ENCODE measurements at regions of chr1 and their contacts with region 1.

Region 1: GRCh38 chr1:117284399-117285215 is 73.9 kb upstream of the VTCN1 start:
- DNase-seq: peak; percentile 73
- H3K4me3 Mint-ChIP-seq: no peak overlapping the region
- H3K27ac Mint-ChIP-seq: no peak overlapping the region
- H3K4me1 Mint-ChIP-seq: no peaks in the 10 kb centered on the region
- H3K27me3 Mint-ChIP-seq: no peaks in the 10 kb centered on the region
- CTCF ChIP-seq: peak; percentile 71

Region 2: DNA sequence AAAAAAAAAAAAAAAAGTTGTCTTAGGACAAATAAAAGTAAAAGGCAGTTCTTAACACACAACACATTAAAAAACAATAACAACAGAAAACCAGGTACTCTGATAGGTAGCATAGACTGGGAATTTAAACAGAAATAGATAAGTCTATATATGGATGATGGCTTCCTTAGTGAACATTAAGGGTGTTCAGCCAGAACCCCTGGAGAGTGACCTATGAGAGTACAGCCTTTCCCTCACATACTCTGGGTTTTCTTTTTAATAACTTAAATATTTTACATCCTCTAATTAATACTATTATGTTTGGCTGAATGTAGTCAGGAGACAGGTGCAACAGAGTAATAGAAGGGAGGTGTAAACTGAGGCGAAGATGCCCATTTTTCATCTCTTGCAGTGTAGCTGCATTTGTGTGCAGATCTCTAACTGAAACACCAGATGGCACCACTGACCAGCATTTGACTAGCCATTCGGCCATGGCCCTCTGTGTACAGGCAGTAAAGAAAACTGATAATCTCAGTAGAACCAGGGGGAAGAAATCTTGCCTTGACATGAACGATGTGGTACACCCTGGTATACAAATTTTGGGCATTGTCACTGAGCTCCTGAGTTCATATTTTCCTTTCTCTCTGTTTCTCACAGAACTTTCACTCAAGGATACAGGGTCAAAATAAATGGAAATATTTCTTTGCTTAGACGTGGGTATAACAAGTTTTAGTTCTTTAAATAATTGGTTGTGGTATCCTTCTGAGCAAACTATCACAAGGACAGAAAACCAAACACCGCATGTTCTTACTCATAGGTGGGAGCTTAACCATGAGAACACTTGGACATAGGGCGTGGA is 216.9 kb before region 1 on chr1:
- CTCF ChIA-PET with region 1: interaction called, 110 read pairs
- POLR2A ChIA-PET with region 1: interaction called, 4 read pairs
- intact Hi-C with region 1: loop called (anchors 1 kb)
- DNase-seq: peak; percentile 66
- H3K4me3 Mint-ChIP-seq: no peak overlapping the region
- H3K27ac Mint-ChIP-seq: no peak overlapping the region
- H3K4me1 Mint-ChIP-seq: peaks cover 7% of the 10 kb centered on the region
- H3K27me3 Mint-ChIP-seq: no peaks in the 10 kb centered on the region
- CTCF ChIP-seq: peak; percentile 82

Region 3: GRCh38 chr1:117093870-117094621 is 190.6 kb before region 1 on chr1:
- CTCF ChIA-PET with region 1: interaction called, 16 read pairs
- POLR2A ChIA-PET with region 1: interaction called, 3 read pairs
- intact Hi-C with region 1: no loop called
- DNase-seq: peak; percentile 78
- H3K4me3 Mint-ChIP-seq: no peak overlapping the region
- H3K27ac Mint-ChIP-seq: peak overlapping the region; percentile 93
- H3K4me1 Mint-ChIP-seq: peaks cover 36% of the 10 kb centered on the region
- H3K27me3 Mint-ChIP-seq: no peaks in the 10 kb centered on the region
- CTCF ChIP-seq: peak; percentile 40

Region 4: DNA sequence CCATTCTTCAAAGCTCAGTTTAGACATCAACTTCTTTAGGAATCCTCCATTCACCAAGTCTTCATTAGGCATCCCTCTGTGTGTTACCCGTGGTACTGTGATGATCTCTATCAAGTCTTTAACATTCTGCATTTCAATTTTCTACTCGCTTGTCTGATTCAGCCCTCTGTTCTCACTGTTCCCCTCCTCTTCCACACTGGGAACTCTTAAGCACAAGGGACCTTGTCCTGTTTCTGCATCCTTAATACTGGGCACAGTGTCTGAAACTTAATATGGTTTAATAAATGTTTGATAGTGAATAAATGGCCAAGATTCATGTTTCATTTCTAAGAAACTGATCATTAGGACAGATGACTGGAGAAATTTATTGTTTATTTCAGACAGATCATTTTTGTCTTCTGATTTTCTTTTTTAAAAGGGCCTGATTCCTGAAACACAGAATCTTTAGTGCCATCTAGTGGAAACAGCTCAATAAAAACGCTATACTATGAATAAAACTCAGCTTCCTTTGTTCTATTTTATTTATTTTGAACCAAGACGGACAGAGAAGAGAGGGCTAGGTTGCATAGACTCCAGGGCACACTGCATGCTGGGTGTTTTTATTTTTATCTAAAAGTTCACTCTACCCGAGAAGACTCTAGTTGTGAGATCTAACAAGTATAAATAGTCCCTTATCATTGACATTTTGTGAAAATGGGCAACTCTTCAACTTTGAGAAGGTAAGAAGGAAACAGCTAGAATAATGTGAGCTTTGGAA is 156.1 kb before region 1 on chr1:
- CTCF ChIA-PET with region 1: interaction called, 65 read pairs
- POLR2A ChIA-PET with region 1: interaction called, 3 read pairs
- intact Hi-C with region 1: loop called (anchors 1 kb)
- DNase-seq: peak; percentile 52
- H3K4me3 Mint-ChIP-seq: no peak overlapping the region
- H3K27ac Mint-ChIP-seq: no peak overlapping the region
- H3K4me1 Mint-ChIP-seq: peaks cover 11% of the 10 kb centered on the region
- H3K27me3 Mint-ChIP-seq: no peaks in the 10 kb centered on the region
- CTCF ChIP-seq: peak; percentile 42

Region 5: GRCh38 chr1:117176579-117176978 is 108.0 kb before region 1 on chr1:
- CTCF ChIA-PET with region 1: no interaction called
- POLR2A ChIA-PET with region 1: no interaction called
- intact Hi-C with region 1: no loop called
- DNase-seq: no peak
- H3K4me3 Mint-ChIP-seq: no peak overlapping the region
- H3K27ac Mint-ChIP-seq: no peak overlapping the region
- H3K4me1 Mint-ChIP-seq: peaks cover 6% of the 10 kb centered on the region
- H3K27me3 Mint-ChIP-seq: no peaks in the 10 kb centered on the region
- CTCF ChIP-seq: no peak

Region 6: DNA sequence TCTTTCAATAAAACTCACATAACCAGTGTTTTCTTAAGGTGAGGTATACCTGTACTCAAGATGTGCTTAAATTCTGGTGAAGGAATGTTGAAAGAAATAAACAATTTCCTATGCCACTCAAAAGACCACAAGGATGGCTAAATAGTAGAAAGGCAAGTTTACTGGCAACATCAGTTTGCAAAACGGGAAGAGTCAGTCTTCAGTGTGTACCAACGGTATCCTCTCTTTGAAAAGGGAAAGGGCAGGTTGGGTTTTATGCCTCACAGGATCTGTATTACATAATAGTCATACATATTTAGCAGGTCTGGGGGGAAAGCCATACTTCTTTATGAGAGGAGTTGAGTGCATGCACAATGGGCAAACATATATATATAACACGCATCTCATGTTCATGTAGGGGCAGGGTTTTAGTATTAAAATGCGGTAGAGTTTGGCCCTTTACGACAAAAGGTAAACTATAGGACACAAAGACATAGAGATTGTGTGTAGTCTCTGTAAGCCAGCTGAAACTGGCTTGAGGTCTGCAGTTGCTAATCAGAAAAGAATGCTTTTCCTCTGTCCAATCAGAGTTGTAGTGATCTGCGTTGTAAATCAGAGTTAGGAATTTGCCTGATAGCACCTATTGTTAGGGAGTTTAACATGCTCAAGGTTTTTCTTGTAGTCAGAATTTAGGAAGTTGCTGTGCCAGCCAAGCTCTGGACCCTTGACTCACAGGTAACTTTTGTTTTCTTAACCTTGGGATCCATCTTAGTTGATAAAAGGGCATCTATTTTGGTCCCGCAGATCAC is 12.8 kb before region 1 on chr1:
- CTCF ChIA-PET with region 1: interaction called, 39 read pairs
- POLR2A ChIA-PET with region 1: interaction called, 3 read pairs
- intact Hi-C with region 1: no loop called
- DNase-seq: no peak
- H3K4me3 Mint-ChIP-seq: no peak overlapping the region
- H3K27ac Mint-ChIP-seq: no peak overlapping the region
- H3K4me1 Mint-ChIP-seq: no peaks in the 10 kb centered on the region
- H3K27me3 Mint-ChIP-seq: no peaks in the 10 kb centered on the region
- CTCF ChIP-seq: no peak